PC-3 (cell line): ENCODE measurements at regions of chr17 and their contacts with region 1.

Region 1: GRCh38 chr17:69779378-69780214 is 295.4 kb upstream of the KCNJ16 start:
- DNase-seq: peak; percentile 91
- ATAC-seq: peak; percentile 79
- H3K4me3 ChIP-seq: no peak overlapping the region
- H3K27ac ChIP-seq: peak overlapping the region; percentile 82
- H3K4me1 ChIP-seq: peaks cover 37% of the 10 kb centered on the region
- H3K27me3 ChIP-seq: no peaks in the 10 kb centered on the region
- CTCF ChIP-seq: no peak

Region 2: GRCh38 chr17:69812240-69812837 is 32.7 kb after region 1 on chr17:
- CTCF ChIA-PET with region 1: no interaction called
- POLR2A ChIA-PET with region 1: no interaction called
- intact Hi-C with region 1: loop called (anchors 1 kb)
- DNase-seq: peak; percentile 92
- ATAC-seq: peak; percentile 86
- H3K4me3 ChIP-seq: no peak overlapping the region
- H3K27ac ChIP-seq: peak overlapping the region; percentile 45
- H3K4me1 ChIP-seq: peaks cover 36% of the 10 kb centered on the region
- H3K27me3 ChIP-seq: no peaks in the 10 kb centered on the region
- CTCF ChIP-seq: no peak

Region 3: DNA sequence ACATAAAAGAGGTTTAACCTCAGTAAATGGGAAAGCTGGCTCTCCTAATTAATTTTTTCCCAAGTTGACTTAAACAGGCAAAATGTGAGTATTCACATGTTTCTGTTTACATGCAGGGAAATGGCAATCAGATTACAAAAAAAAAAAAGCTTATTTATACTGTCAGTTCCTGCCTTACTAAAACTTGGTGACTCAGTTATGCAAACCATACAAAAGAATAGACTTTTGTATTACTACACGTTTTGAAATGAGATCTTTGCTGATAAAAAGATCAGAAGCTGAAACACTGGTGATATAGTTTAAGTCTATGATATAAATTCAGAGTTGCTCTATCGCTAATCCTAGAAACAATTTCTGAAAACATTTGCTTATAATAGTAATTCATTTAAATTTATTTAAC is 380.4 kb after region 1 on chr17:
- CTCF ChIA-PET with region 1: no interaction called
- POLR2A ChIA-PET with region 1: no interaction called
- intact Hi-C with region 1: loop called (anchors 5 kb)
- DNase-seq: peak; percentile 83
- ATAC-seq: peak; percentile 86
- H3K4me3 ChIP-seq: no peak overlapping the region
- H3K27ac ChIP-seq: no peak overlapping the region
- H3K4me1 ChIP-seq: peaks cover 17% of the 10 kb centered on the region
- H3K27me3 ChIP-seq: no peaks in the 10 kb centered on the region
- CTCF ChIP-seq: no peak